GM13977 (cell line): ENCODE measurements at regions of chr3 and their contacts with region 1.

Region 1: DNA sequence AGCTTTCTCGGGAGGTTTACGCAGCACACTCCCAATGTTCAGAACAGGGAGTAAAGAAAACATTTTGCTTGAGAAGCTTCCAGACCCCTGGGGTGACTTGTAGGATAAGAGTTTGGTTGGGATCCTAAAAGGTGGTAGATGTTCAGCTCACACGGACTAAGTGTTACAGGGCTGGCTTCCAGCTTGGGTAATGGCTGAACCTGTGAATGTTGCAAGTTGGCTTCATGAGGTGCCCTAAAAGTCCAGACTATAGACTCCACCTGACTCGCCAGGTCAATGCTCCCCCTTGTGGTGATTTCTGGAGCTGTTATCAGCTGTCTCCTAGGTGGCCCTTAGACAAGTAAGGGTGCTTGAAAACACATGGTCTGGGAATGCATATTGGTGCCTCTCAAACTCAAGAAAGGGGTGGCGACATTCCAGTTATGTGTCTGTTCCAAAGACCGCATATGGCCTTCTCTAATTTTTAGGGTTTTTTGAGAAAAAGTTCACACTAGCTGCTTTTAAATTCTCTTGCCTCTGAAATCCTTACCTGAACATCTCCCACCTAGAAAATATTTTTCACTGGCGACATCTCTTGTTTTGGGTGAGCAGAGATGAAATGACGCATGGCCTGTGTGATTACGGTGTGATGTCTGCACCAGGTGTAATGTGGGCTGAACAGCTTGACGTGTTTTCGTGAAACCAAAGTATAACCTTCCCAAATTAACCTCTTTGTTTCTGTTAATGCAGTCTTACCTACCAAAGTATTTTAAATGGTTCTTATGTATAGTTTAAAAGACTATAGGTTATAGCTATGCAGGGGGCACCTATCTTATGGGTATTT is 175.7 kb upstream of the KBTBD8 start:
- DNase-seq: peak; percentile 43
- CTCF ChIP-seq: peak; percentile 81

Region 2: DNA sequence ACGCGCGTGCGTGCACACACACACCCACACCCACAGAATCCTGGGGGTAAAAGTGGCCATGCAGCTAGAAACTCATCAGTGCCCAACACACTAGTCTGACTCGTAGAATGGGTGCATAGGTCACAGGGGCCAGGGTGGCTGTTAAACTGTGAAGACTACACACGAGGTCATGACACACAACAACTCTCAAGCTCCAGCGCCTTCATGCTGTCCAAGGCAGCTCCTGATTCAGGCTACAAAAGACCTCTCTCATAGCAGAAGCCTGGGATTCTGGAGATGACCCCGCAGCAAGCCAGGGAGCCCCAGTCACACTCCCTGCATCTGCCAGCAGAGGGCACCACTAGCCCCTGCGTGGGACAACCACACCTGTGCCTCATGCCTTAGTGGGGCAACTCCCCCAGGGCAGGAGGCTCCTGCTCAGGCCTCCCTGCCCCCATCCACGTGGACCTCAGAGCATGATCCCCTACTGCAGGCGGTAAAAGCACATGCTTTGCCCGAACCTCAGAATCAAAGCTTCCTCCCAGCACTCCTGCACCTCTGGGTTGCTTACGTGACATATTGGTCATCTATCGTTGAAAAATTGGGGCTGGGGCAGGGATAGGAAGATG is 414.7 kb before region 1 on chr3:
- in situ Hi-C with region 1: loop called (anchors 25 kb)
- DNase-seq: peak; percentile 90
- CTCF ChIP-seq: peak; percentile 95